ENCODE measurements at regions of chr12 and their contacts with region 1.

Region 1: DNA sequence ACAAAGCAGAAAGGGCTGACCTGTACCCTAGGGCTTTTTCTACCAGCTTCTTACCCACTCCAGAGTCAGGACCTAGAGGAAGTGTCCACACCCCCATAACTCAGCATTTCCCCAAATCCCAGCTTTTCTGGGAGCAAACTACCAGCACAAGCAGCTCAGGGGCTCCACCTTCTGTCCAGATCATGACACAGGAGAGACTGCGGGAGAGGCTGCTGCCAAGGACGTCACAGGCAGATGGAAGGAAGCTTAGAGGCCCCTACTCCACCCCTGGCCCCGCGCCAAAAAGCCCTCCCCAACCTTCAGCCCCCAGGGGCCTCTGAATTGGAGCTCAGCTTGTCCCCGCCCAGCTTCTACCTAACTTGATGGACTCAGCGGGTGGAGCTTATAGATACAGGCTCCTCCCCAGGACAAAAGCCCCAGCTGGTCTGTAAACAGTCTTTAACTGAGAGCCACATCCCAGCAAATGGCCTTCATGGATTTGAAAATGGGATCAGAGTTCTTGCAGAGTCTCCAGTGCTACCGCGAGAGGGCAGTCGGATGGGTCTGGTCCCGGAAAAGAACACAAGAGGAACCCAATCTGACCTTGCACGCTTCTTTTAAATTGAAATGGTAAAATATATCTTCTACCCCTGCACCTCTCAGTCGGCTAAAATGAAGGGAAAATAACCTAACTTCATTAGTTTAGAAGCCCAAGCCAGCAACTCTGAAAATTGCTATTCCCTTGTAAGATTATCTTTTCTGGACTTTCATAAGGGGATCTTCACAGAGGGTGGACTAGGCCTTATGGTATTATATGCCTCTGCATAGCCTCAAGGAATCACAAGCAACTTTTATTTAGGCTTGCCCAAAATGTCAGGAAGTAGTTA is 6.8 kb upstream of the BAZ2A start:
- DNase-seq: peak; percentile 87
- ATAC-seq: peak; percentile 69
- H3K4me3 ChIP-seq: peak overlapping the region; percentile 91
- H3K27ac ChIP-seq: peak overlapping the region; percentile 87
- H3K4me1 ChIP-seq: peaks cover 21% of the 10 kb centered on the region
- H3K27me3 ChIP-seq: no peaks in the 10 kb centered on the region
- CTCF ChIP-seq: peak; percentile 72 to 89 (median 81)
- EP300 ChIP-seq: 0 out of 4 replicates have a peak, but pooled peaks of 1 of the 2 experiments have one; percentile 22
- POLR2A ChIP-seq: no peak
- RAD21 ChIP-seq: peak; percentile 72

Region 2: DNA sequence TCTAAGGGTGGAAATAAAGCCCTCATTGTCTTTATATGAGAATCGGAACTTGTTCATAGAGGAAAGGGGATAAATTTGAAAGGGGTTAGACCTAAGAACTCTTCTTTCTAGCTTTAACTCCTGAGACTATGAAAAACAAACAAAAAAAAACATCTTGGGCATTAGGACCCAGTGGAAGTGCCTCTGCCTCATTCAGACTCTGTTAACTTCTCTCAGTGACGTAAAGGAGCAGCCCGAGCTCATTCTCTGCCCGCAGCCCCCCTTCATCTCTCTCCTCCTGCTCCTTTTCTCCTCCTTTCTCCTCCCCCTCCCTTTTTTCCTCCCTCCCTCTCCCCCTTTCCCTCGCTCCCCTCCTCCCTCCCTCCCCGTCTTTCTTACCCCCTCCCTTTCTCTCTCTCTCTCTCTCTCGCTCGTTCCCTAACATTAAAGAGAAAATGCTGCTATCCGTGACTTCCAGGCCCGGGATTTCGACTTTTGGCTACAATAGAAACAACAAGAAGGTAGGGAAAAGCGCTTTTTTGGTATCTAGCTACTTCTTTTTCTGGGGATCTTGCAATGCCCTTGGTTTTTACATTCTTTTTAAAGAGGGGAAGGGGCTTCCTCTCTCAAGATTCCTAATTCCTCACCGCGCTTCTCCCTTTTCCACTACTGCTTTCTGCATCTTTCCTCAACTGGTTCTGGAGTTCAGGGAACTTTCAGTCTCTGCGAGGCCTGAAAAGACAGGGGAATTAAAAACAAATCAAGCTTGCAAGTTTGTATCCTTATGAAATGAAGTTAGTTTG is 115.1 kb before region 1 on chr12 and contains the start of gene RBMS2:
- CTCF ChIA-PET with region 1: interaction called, 18 read pairs
- POLR2A ChIA-PET with region 1: interaction called, 3 read pairs
- RAD21 ChIA-PET with region 1: interaction called, 11 read pairs
- SMC1A ChIA-PET with region 1: interaction called, 6 read pairs
- in situ Hi-C with region 1: no loop called
- intact Hi-C with region 1: no loop called
- DNase-seq: no peak
- ATAC-seq: peak; percentile 95
- H3K4me3 ChIP-seq: peak within 1 kb of the TSS; percentile 55; the same call in 1 of the 2 replicates
- H3K27ac ChIP-seq: 0 out of 2 replicates have a peak within 1 kb of the TSS, but pooled peaks have one; percentile 18
- H3K4me1 ChIP-seq: peaks cover 4% of the 10 kb centered on the region; the same call in 1 of the 2 replicates
- H3K27me3 ChIP-seq: no peaks in the 10 kb centered on the region; a peak in 1 of 4 replicates
- CTCF ChIP-seq: no peak
- EP300 ChIP-seq: no peak
- POLR2A ChIP-seq: no peak
- RAD21 ChIP-seq: no peak
- polyA plus RNA-seq, gene RBMS2: 0.90 to 1.1 TPM

Region 3: DNA sequence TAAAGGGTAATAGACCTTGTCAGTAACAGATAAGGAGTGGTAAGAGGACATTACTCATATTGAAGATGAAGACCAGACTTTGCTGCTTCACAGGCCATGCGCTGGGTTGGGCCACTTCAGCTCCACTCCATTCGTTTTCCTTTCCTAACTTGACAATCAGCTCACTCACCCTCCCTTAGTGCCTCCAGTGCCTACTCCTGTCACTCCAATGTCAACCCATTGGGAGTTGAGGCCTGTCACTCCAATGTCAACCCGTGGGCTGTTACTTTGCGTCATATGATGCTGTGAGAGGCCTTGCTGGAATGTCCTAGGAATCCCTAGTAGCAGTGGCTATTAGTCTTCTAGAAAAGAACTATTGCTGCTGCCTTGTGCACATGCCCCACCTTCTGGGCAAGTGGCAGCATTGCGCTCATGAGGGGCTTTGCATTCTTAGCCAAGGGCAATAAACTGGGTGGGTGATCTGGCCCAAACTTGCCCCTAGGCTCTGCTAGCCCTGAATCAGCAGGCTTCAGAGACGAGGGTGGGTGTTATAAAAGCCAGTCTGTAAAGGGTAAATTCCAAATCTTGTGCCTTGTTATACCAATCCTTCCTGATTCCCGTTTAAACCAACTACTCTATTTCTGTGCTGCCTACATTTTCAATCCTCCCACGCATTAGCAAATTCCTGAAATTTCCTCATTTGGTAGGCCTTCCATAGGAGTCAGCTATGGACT is 42.8 kb before region 1 on chr12:
- CTCF ChIA-PET with region 1: interaction called, 50 read pairs
- POLR2A ChIA-PET with region 1: interaction called, 7 read pairs
- RAD21 ChIA-PET with region 1: interaction called, 21 read pairs
- SMC1A ChIA-PET with region 1: interaction called, 30 read pairs
- in situ Hi-C with region 1: no loop called
- intact Hi-C with region 1: no loop called
- DNase-seq: no peak
- ATAC-seq: peak; percentile 80
- H3K4me3 ChIP-seq: no peak overlapping the region
- H3K27ac ChIP-seq: no peak overlapping the region
- H3K4me1 ChIP-seq: no peaks in the 10 kb centered on the region; the same call in 1 of the 2 replicates
- H3K27me3 ChIP-seq: no peaks in the 10 kb centered on the region
- CTCF ChIP-seq: peak; percentile 83 to 94 (median 91)
- EP300 ChIP-seq: no peak
- POLR2A ChIP-seq: 0 out of 2 replicates have a peak, but pooled peaks have one; percentile 35
- RAD21 ChIP-seq: peak; percentile 88

Region 4: DNA sequence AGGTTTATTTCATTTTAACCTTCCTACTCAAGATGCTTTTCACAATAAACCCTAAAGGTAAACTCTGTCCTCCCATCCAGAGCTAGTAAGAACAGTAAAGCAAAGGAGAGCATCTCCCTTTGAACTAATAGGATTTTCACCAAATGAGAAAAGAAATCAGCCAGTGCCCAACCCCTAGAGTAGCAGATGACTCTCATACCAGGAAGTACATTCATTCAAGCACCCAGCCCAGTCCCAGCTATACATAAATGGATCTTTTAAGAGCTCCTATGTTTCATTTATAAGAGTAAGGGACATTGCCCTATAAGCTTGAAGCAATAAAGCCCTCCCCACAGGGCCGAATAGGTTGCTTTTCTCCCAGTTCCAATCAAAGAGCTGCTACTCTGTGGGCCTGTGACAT is 14.4 kb before region 1 on chr12:
- CTCF ChIA-PET with region 1: interaction called, 33 read pairs
- POLR2A ChIA-PET with region 1: interaction called, 54 read pairs
- RAD21 ChIA-PET with region 1: interaction called, 29 read pairs
- SMC1A ChIA-PET with region 1: interaction called, 68 read pairs
- in situ Hi-C with region 1: no loop called
- intact Hi-C with region 1: no loop called
- DNase-seq: no peak
- ATAC-seq: no peak
- H3K4me3 ChIP-seq: no peak overlapping the region
- H3K27ac ChIP-seq: no peak overlapping the region
- H3K4me1 ChIP-seq: peaks cover 16% of the 10 kb centered on the region; the same call in 1 of the 2 replicates
- H3K27me3 ChIP-seq: no peaks in the 10 kb centered on the region
- CTCF ChIP-seq: no peak
- EP300 ChIP-seq: no peak
- POLR2A ChIP-seq: no peak
- RAD21 ChIP-seq: no peak

Region 5: GRCh38 chr12:56688129-56688845 is 51.4 kb after region 1 on chr12 and contains the start of gene PTGES3:
- CTCF ChIA-PET with region 1: interaction called, 58 read pairs
- POLR2A ChIA-PET with region 1: interaction called, 155 read pairs
- RAD21 ChIA-PET with region 1: interaction called, 176 read pairs
- SMC1A ChIA-PET with region 1: interaction called, 28 read pairs
- in situ Hi-C with region 1: no loop called
- intact Hi-C with region 1: loop called (anchors 2 kb)
- DNase-seq: peak; percentile 92
- ATAC-seq: peak; percentile 75
- H3K4me3 ChIP-seq: peak within 1 kb of the TSS; percentile 90
- H3K27ac ChIP-seq: peak within 1 kb of the TSS; percentile 99
- H3K4me1 ChIP-seq: no peaks in the 10 kb centered on the region
- H3K27me3 ChIP-seq: no peaks in the 10 kb centered on the region
- CTCF ChIP-seq: no peak
- EP300 ChIP-seq: peak in 1 of 2 experiments; percentile 47; a peak in 2 of 4 replicates
- POLR2A ChIP-seq: peak; percentile 93
- RAD21 ChIP-seq: no peak
- polyA plus RNA-seq, gene PTGES3: 117 to 186 TPM

Region 6: GRCh38 chr12:57088459-57089248 is 451.7 kb after region 1 on chr12 and contains the start of gene NAB2:
- CTCF ChIA-PET with region 1: no interaction called
- POLR2A ChIA-PET with region 1: no interaction called
- RAD21 ChIA-PET with region 1: no interaction called
- SMC1A ChIA-PET with region 1: no interaction called
- in situ Hi-C with region 1: loop called (anchors 10 kb)
- intact Hi-C with region 1: loop called (anchors 5 kb)
- DNase-seq: peak; percentile 72
- ATAC-seq: peak; percentile 69
- H3K4me3 ChIP-seq: peak within 1 kb of the TSS; percentile 95
- H3K27ac ChIP-seq: peak within 1 kb of the TSS; percentile 98
- H3K4me1 ChIP-seq: peaks cover 31% of the 10 kb centered on the region
- H3K27me3 ChIP-seq: no peaks in the 10 kb centered on the region
- CTCF ChIP-seq: no peak
- EP300 ChIP-seq: 0 out of 4 replicates have a peak, but pooled peaks of 1 of the 2 experiments have one; percentile 48
- POLR2A ChIP-seq: peak; percentile 82
- RAD21 ChIP-seq: no peak
- polyA plus RNA-seq, gene NAB2: 0.35 to 1.0 TPM